ENCODE measurements at regions of chr12 and their contacts with region 1.

Region 1: GRCh38 chr12:51025836-51026638 is at the start of gene SLC11A2:
- DNase-seq: peak; percentile 96
- ATAC-seq: peak; percentile 91
- H3K4me3 Mint-ChIP-seq: peak within 1 kb of the TSS; percentile 95
- H3K27ac Mint-ChIP-seq: peak within 1 kb of the TSS; percentile 95
- H3K4me1 Mint-ChIP-seq: peaks cover 48% of the 10 kb centered on the region
- H3K27me3 Mint-ChIP-seq: no peaks in the 10 kb centered on the region
- CTCF ChIP-seq: no peak
- total RNA-seq, gene SLC11A2: 21.6 to 23.9 TPM

Region 2: DNA sequence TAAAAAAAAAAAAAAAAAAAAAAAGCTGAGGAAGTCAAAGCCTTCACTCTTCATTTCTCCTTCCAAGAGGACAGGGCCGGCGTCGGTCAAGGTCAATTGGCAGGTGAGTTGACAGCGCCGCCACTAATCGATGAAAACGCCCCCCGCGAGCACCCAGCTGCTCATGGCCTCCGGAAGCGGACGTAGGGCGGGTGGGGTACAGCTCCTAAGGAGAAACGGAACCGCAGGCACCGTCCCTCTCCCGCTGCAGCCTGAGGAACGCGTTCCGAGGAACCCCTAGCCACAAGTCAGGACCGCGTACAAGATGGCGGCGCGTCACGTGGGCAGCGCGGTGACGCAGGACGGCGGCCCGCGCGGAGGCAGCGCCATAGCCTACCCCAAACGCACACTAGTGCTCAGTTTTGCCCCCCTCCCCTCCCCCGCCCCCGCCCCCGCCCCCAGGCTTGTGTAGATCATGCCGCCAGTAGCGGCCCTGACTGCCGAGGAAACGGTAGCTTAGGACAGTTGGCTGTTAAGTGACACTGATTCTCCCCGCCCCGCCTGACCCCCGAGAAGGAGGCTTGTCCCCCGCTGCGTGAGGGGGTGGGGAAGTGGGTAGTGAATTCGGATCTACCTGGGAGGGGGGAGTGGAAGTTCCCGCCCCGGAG is 262.3 kb before region 1 on chr12 and contains the start of gene ATF1:
- CTCF ChIA-PET with region 1: interaction called, 38 read pairs
- POLR2A ChIA-PET with region 1: interaction called, 12 read pairs
- intact Hi-C with region 1: no loop called
- DNase-seq: peak; percentile 92
- ATAC-seq: peak; percentile 83
- H3K4me3 Mint-ChIP-seq: peak within 1 kb of the TSS; percentile 82
- H3K27ac Mint-ChIP-seq: peak within 1 kb of the TSS; percentile 98
- H3K4me1 Mint-ChIP-seq: peaks cover 31% of the 10 kb centered on the region
- H3K27me3 Mint-ChIP-seq: no peaks in the 10 kb centered on the region
- CTCF ChIP-seq: no peak
- total RNA-seq, gene ATF1: 46.6 to 49.8 TPM

Region 3: GRCh38 chr12:50825372-50825838 is 200.6 kb before region 1 on chr12:
- CTCF ChIA-PET with region 1: interaction called, 17 read pairs
- POLR2A ChIA-PET with region 1: no interaction called
- intact Hi-C with region 1: loop called (anchors 1 kb)
- DNase-seq: no peak
- ATAC-seq: peak; percentile 74
- H3K4me3 Mint-ChIP-seq: no peak overlapping the region
- H3K27ac Mint-ChIP-seq: peak overlapping the region; percentile 71
- H3K4me1 Mint-ChIP-seq: peaks cover 8% of the 10 kb centered on the region
- H3K27me3 Mint-ChIP-seq: no peaks in the 10 kb centered on the region
- CTCF ChIP-seq: peak; percentile 75

Region 4: DNA sequence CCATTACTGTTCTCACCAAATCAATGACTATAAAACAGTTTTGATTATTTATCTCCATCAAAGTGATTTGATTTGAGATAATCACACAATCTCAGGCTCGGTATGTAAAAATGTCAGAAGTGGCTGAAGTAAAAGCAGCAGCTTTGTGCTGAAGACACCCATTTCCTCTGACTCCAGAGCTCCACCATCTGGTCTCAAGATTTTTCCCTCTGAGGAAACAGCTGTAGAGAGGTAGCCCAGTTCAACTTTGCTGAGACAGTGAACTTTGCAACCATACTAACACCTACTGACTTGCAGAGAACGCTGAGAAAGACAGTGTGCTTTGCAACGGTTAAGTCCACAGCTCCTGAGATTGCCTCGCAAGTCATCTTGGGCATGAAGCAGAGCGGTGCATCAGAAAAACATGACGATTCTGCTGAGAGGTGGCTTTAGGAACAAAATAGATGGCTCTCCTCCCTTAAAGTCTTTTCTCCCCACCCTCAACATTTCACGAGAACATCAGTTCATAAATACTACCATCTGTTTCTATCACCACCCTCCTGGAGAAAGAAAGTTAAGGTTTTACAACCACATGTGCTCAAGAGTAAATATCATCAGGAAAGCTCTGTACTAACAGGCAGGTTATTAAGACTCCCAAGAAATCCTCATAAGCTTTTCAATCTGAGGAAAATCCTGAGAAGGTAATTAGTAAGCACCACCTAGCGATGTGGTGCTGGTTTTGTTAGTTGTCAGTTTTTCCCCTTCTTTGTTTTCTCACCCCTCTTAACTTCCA is 38.9 kb before region 1 on chr12:
- CTCF ChIA-PET with region 1: interaction called, 12 read pairs
- POLR2A ChIA-PET with region 1: interaction called, 12 read pairs
- intact Hi-C with region 1: no loop called
- DNase-seq: peak; percentile 40
- ATAC-seq: peak; percentile 62
- H3K4me3 Mint-ChIP-seq: no peak overlapping the region
- H3K27ac Mint-ChIP-seq: peak overlapping the region; percentile 73
- H3K4me1 Mint-ChIP-seq: peaks cover 44% of the 10 kb centered on the region
- H3K27me3 Mint-ChIP-seq: no peaks in the 10 kb centered on the region
- CTCF ChIP-seq: peak; percentile 25

Region 5: DNA sequence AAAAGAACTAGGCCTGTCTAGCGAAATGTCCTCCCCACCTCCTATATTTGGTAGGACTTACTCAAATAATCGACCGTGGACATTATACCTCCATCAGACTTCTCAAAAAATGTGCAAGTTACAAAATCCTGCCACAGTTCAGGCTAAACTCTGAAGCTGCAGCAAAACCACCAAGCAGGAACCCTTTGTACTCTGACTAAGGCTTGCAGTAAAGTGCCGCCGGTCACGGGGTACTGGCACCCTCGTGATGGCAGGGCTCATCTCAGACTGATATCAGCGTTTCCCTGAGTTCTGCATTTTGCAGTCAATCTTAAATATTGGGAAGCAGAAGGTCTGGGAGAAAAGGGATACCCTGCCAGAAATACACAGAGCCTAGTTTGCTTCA is 17.0 kb before region 1 on chr12:
- CTCF ChIA-PET with region 1: interaction called, 5 read pairs
- POLR2A ChIA-PET with region 1: interaction called, 13 read pairs
- intact Hi-C with region 1: no loop called
- DNase-seq: peak; percentile 81
- ATAC-seq: peak; percentile 96
- H3K4me3 Mint-ChIP-seq: peak overlapping the region; percentile 71
- H3K27ac Mint-ChIP-seq: peak overlapping the region; percentile 88
- H3K4me1 Mint-ChIP-seq: peaks cover 36% of the 10 kb centered on the region
- H3K27me3 Mint-ChIP-seq: no peaks in the 10 kb centered on the region
- CTCF ChIP-seq: no peak

Region 6: GRCh38 chr12:51036279-51036678 is 10.2 kb after region 1 on chr12:
- CTCF ChIA-PET with region 1: interaction called, 3 read pairs
- POLR2A ChIA-PET with region 1: interaction called, 14 read pairs
- intact Hi-C with region 1: no loop called
- DNase-seq: no peak
- ATAC-seq: no peak
- H3K4me3 Mint-ChIP-seq: no peak overlapping the region
- H3K27ac Mint-ChIP-seq: no peak overlapping the region
- H3K4me1 Mint-ChIP-seq: peaks cover 5% of the 10 kb centered on the region
- H3K27me3 Mint-ChIP-seq: no peaks in the 10 kb centered on the region
- CTCF ChIP-seq: no peak

Region 7: DNA sequence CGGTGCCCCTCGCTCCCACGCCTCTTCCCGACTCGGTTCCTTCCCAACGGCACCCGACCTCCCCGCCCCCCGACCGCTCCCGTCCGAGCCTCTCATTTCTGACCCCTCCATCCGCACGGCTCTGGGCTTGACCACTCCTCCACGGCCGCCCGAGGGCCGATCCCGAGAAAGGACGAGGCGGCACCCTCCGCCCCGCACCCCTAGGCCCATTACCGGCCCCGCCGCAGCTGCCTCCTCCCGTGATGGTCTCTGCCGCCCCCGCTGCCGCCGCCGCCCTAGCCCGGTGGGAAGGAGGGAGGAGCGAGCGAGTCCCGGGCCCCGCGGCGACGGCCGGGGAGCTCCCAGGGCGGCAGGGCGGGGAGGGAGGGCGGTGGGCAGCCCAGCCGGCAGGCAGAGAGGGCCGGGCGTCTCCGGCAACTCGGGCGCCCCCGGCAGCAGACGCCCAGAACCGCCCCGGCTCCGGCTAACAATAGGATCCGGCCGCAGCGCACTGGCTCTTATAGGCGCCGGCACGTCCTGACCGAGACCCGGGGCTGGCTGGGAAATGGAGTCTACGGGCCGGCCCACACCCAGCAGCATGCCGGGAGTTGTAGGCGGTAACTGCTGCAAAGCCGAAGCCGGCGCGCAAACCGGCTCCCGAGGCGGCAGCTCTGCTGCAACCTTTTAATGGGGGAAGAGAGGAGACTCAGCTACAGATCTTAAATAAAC is 57.2 kb after region 1 on chr12 and contains the start of gene CSRNP2:
- CTCF ChIA-PET with region 1: no interaction called
- POLR2A ChIA-PET with region 1: interaction called, 10 read pairs
- intact Hi-C with region 1: no loop called
- DNase-seq: peak; percentile 97
- ATAC-seq: peak; percentile 99
- H3K4me3 Mint-ChIP-seq: peak within 1 kb of the TSS; percentile 94
- H3K27ac Mint-ChIP-seq: peak within 1 kb of the TSS; percentile 90
- H3K4me1 Mint-ChIP-seq: peaks cover 36% of the 10 kb centered on the region
- H3K27me3 Mint-ChIP-seq: no peaks in the 10 kb centered on the region
- CTCF ChIP-seq: no peak
- total RNA-seq, gene CSRNP2: 9.2 to 9.6 TPM

Measured in activated CD8-positive, alpha-beta T cell treated with anti-CD3 and anti-CD28 coated beads for 36 hours (primary cell).